HCT116 (cell line): ENCODE measurements at regions of chr5 and their contacts with region 1.

Region 1: GRCh38 chr5:113606298-113607134 is 93.0 kb downstream of the YTHDC2 start:
- DNase-seq: peak; percentile 38
- ATAC-seq: peak; percentile 97
- H3K4me3 ChIP-seq: no peak overlapping the region
- H3K27ac ChIP-seq: no peak overlapping the region
- H3K4me1 ChIP-seq: peaks cover 0 to 8% of the 10 kb centered on the region in 2 experiments; a peak in 1 of 4 replicates
- H3K27me3 ChIP-seq: no peaks in the 10 kb centered on the region
- CTCF ChIP-seq: peak; percentile 70 to 93 (median 78); a peak in 5 of 6 replicates
- POLR2A ChIP-seq: no peak
- RAD21 ChIP-seq: peak; percentile 96

Region 2: GRCh38 chr5:112174959-112175594 is 1431.4 kb before region 1 on chr5:
- CTCF ChIA-PET with region 1: interaction called, 5 read pairs
- POLR2A ChIA-PET with region 1: no interaction called
- RAD21 ChIA-PET with region 1: no interaction called
- intact Hi-C with region 1: loop called (anchors 2 kb)
- DNase-seq: peak; percentile 61
- ATAC-seq: peak; percentile 89
- H3K4me3 ChIP-seq: peak overlapping the region in 1 of 2 experiments; percentile 22; a peak in 1 of 4 replicates
- H3K27ac ChIP-seq: no peak overlapping the region
- H3K4me1 ChIP-seq: peaks cover 2 to 3% of the 10 kb centered on the region in 2 experiments; a peak in 2 of 4 replicates
- H3K27me3 ChIP-seq: no peaks in the 10 kb centered on the region
- CTCF ChIP-seq: peak; percentile 55 to 85 (median 78)
- POLR2A ChIP-seq: no peak
- RAD21 ChIP-seq: peak; percentile 83

Region 3: DNA sequence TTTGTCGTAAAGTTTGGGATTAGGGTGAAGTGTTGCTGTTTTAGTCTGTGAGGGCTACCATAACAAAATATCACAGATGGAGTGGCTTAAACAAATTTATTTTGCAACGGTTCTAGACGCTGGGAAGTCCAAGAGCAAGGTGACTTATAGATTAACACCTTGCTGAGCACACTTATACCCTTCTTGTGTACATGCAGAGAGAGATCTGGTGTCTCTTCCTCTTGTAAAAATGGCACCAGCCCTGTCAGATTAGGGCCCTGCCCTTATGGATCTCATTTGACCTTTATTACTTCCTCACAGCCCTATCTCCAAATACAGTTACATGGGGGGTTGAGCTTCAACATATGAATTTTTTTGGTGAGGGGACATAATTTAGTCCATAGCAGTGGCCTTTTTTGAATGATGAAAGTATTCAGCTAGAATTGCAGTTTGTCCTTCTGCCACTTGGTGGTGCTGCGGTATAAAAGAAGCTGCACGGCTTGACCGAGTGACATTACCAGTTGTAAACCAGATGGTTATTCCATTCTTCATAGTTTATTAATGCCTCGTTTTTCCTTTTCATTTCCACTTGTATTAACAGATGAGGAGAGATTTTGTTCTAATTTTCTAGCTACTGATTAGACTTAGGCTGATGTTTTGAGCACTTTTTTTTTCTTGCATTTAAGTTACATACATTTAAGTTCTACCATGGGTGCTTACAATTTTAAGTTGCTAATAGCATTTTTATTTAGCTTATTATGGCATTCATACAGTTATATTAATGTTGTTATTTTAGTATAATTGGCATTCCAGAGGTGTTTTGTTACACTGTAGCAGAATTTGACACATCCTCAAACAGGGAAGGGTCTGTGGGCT is 610.5 kb before region 1 on chr5:
- CTCF ChIA-PET with region 1: interaction called, 5 read pairs
- POLR2A ChIA-PET with region 1: no interaction called
- RAD21 ChIA-PET with region 1: no interaction called
- intact Hi-C with region 1: loop called (anchors 1 kb)
- DNase-seq: peak; percentile 42
- ATAC-seq: peak; percentile 87
- H3K4me3 ChIP-seq: no peak overlapping the region
- H3K27ac ChIP-seq: no peak overlapping the region
- H3K4me1 ChIP-seq: no peaks in the 10 kb centered on the region
- H3K27me3 ChIP-seq: no peaks in the 10 kb centered on the region
- CTCF ChIP-seq: peak; percentile 72 to 97 (median 81)
- POLR2A ChIP-seq: no peak
- RAD21 ChIP-seq: peak; percentile 92

Region 4: DNA sequence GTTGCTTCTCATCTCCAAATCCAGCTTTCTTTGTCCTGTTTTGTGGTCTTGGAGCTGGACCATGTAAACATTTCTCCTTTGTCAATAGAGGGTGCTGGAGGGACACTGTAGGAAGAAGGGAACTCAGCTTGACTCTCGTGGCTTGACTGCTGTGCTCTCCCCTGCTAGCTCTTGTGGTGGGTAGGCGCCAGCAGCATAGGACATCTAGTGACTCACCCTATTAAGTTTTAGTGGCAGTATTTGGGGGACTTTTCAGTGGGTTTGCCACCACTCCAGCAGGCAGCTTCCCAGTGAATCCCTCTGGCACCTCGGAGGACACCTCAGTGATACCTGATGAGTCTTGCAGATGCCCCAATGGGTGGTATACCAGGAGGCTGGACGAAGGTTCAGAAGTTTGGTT is 269.5 kb before region 1 on chr5:
- CTCF ChIA-PET with region 1: interaction called, 14 read pairs
- POLR2A ChIA-PET with region 1: no interaction called
- RAD21 ChIA-PET with region 1: interaction called in 1 of 2 experiments, 3 read pairs
- intact Hi-C with region 1: loop called (anchors 1 kb)
- DNase-seq: peak; percentile 70
- ATAC-seq: peak; percentile 95
- H3K4me3 ChIP-seq: no peak overlapping the region
- H3K27ac ChIP-seq: no peak overlapping the region
- H3K4me1 ChIP-seq: no peaks in the 10 kb centered on the region
- H3K27me3 ChIP-seq: no peaks in the 10 kb centered on the region
- CTCF ChIP-seq: peak; percentile 60 to 69 (median 68)
- POLR2A ChIP-seq: no peak
- RAD21 ChIP-seq: peak; percentile 88

Region 5: GRCh38 chr5:113378959-113379541 is 227.5 kb before region 1 on chr5:
- CTCF ChIA-PET with region 1: interaction called, 5 read pairs
- POLR2A ChIA-PET with region 1: no interaction called
- RAD21 ChIA-PET with region 1: no interaction called
- intact Hi-C with region 1: loop called (anchors 1 kb)
- DNase-seq: peak; percentile 50
- ATAC-seq: peak; percentile 81
- H3K4me3 ChIP-seq: no peak overlapping the region
- H3K27ac ChIP-seq: no peak overlapping the region
- H3K4me1 ChIP-seq: no peaks in the 10 kb centered on the region
- H3K27me3 ChIP-seq: no peaks in the 10 kb centered on the region
- CTCF ChIP-seq: peak; percentile 63 to 80 (median 75)
- POLR2A ChIP-seq: no peak
- RAD21 ChIP-seq: peak; percentile 80